WTC11 (cell line): ENCODE measurements at regions of chr1 and their contacts with region 1.

Region 1: GRCh38 chr1:46724991-46725735 is 6.2 kb upstream of the EFCAB14 start:
- DNase-seq: peak; percentile 69
- ATAC-seq: peak; percentile 97
- H3K4me3 Mint-ChIP-seq: no peak overlapping the region
- H3K27ac Mint-ChIP-seq: no peak overlapping the region
- H3K4me1 Mint-ChIP-seq: peaks cover 16% of the 10 kb centered on the region
- H3K27me3 Mint-ChIP-seq: peaks cover 14% of the 10 kb centered on the region
- CTCF ChIP-seq: peak; percentile 53

Region 2: GRCh38 chr1:46622344-46622743 is 102.8 kb before region 1 on chr1:
- CTCF ChIA-PET with region 1: interaction called, 15 read pairs
- POLR2A ChIA-PET with region 1: no interaction called
- DNase-seq: peak; percentile 59
- ATAC-seq: peak; percentile 93
- H3K4me3 Mint-ChIP-seq: no peak overlapping the region
- H3K27ac Mint-ChIP-seq: no peak overlapping the region
- H3K4me1 Mint-ChIP-seq: peaks cover 5% of the 10 kb centered on the region
- H3K27me3 Mint-ChIP-seq: peaks cover 21% of the 10 kb centered on the region
- CTCF ChIP-seq: peak; percentile 23; the same call in 1 of the 2 replicates

Region 3: GRCh38 chr1:46747683-46748288 is 22.6 kb after region 1 on chr1:
- CTCF ChIA-PET with region 1: interaction called, 12 read pairs
- POLR2A ChIA-PET with region 1: no interaction called
- DNase-seq: peak; percentile 68
- ATAC-seq: peak; percentile 100
- H3K4me3 Mint-ChIP-seq: no peak overlapping the region
- H3K27ac Mint-ChIP-seq: no peak overlapping the region
- H3K4me1 Mint-ChIP-seq: no peaks in the 10 kb centered on the region
- H3K27me3 Mint-ChIP-seq: peaks cover 12% of the 10 kb centered on the region
- CTCF ChIP-seq: peak; percentile 38; the same call in 1 of the 2 replicates